Right ventricle myocardium inferior (tissue), 1 donor: ENCODE measurements at regions of chr22 and their contacts with region 1.

Region 1: DNA sequence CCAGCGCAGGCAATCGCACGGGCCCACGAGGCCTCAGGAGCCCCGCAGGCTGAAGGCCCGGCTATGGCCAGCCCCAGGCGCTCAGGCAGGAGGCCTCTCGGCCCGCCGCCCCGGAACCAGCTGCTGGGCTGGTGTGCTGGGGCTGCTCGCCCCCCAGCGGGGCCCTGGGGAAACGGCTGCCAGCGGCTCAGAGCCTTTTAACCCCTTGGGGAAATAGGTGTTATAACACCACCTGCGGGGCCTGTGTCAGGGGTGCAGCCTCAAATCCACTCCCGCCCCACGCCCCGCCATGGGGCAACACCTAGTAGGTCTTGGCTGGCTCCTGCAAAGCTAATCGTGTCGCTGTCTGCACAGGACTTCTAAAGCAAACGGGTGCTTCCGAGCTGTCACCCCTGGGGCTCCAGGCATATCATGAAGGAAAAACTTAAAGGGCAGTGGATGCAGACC is 237.4 kb downstream of the TTC28 start:
- DNase-seq: peak; percentile 88
- ATAC-seq: peak; percentile 92

Region 2: GRCh38 chr22:28019881-28020871 is 422.1 kb before region 1 on chr22:
- intact Hi-C with region 1: loop called (anchors 5 kb)
- DNase-seq: peak; percentile 87
- ATAC-seq: peak; percentile 66

Region 3: GRCh38 chr22:28112548-28113043 is 329.7 kb before region 1 on chr22:
- intact Hi-C with region 1: loop called (anchors 5 kb)
- DNase-seq: peak; percentile 75
- ATAC-seq: peak; percentile 72

Region 4: DNA sequence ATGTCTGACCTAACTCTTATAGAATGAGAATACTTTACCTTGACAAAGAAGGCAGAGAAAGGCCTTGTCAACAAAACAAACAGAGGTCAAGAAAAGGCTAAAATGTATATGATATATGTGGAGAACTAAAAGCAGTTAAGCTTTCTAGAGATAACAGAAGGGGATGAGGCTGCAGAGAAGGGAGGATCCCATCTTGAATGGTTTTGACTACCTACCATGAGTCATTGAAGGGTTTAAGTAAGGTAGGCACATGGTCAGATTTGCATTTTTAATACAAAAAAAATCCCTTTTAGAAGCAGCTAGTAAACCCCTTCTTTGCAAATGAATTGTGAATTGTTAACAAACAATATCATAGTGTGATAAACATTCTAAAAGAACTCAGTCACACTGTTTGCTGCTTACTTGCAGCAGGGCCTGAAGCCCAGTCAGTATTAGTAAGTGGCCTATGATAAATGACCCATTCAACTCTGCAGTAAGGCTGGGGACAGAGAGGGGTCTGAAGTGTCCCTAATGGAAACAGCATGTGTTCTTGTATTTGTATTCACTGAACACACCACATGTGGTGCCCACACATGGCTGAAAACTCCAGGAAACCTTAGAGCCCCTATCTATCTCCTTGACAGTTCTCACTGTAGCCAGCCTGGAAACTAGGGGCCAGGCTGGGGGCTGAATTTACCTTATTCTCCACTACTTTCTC is 194.5 kb before region 1 on chr22:
- intact Hi-C with region 1: loop called (anchors 5 kb)
- DNase-seq: no peak
- ATAC-seq: no peak

Region 5: DNA sequence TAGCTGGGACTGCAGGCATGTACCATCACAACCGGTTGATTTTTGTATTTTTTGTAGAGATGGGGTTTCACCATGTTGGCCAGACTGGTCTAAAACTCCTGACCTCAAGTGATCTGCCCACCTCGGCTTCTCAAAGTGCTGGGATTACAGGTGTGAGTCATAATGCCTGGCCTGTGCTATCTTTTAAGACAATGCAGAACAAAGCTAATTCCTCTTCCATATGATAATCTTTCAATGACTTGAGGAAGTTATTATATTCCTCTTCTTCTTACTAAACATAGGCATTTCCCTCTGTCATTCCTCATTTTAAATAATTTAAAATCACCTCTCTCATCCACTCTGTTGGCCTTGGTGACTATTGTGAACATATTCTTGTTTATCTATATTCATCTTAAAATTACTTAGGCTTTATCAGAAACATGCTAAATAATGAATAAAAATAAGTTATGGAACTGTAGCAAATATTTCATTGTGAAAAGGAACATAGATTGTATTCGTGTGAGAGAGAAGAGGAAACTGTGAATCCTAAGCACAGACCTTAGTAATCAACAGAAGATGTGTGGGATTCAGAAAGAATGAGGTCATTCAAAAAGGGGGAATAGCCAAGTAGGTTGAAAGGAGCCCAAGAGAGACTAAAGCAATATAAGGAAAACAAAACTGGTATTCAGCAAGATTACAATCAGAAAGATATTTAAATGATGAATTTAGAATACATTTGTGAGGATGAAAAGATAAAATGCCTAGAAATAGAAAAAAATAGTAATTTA is 32.1 kb before region 1 on chr22:
- intact Hi-C with region 1: no loop called
- DNase-seq: no peak
- ATAC-seq: no peak

Region 6: GRCh38 chr22:28454431-28455064 is 12.3 kb after region 1 on chr22:
- intact Hi-C with region 1: no loop called
- DNase-seq: no peak
- ATAC-seq: no peak

Region 7: GRCh38 chr22:28547132-28547842 is 105.0 kb after region 1 on chr22:
- intact Hi-C with region 1: no loop called
- DNase-seq: no peak
- ATAC-seq: no peak

Region 8: GRCh38 chr22:28594797-28595462 is 152.6 kb after region 1 on chr22:
- intact Hi-C with region 1: loop called (anchors 10 kb)
- DNase-seq: no peak
- ATAC-seq: peak; percentile 88